GM10248 (cell line): ENCODE measurements at regions of chr12 and their contacts with region 1.

Region 1: GRCh38 chr12:54526812-54527630 is 22.4 kb upstream of the PDE1B start:
- DNase-seq: peak; percentile 30
- CTCF ChIP-seq: peak; percentile 65

Region 2: GRCh38 chr12:54463034-54463433 is 64.0 kb before region 1 on chr12:
- CTCF ChIA-PET with region 1: no interaction called
- POLR2A ChIA-PET with region 1: no interaction called
- DNase-seq: no peak
- CTCF ChIP-seq: no peak

Region 3: DNA sequence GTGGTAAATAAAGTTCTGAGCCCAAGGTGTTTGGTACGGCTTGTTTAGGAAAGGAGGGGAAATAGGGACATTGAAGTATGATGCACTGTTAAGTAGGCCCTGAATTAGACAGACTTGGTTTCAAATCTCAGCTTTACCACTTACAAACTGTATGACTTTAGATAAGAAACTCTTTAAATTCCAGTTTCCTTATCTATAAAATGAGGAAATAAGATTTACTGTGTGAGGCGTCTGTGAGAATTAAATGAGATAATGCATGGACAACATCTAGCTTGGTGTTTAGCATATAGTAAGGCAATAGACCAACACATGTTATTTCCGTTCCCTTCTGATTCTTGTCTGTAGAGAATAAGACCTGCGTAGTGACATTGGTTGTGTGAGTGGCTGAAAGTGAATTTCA is 22.5 kb before region 1 on chr12:
- CTCF ChIA-PET with region 1: interaction called, 13 read pairs
- POLR2A ChIA-PET with region 1: no interaction called
- DNase-seq: no peak
- CTCF ChIP-seq: no peak

Region 4: GRCh38 chr12:54831631-54832030 is 304.6 kb after region 1 on chr12:
- CTCF ChIA-PET with region 1: no interaction called
- POLR2A ChIA-PET with region 1: no interaction called
- DNase-seq: no peak
- CTCF ChIP-seq: no peak